Activated CD4-positive, alpha-beta T cell treated with anti-CD3 and anti-CD28 coated beads, Interleukin-2, amount 10 ng/mL, durations not matched to agents 24 days and 14 days (primary cell): ENCODE measurements at regions of chr19 and their contacts with region 1.

Region 1: GRCh38 chr19:28710278-28710677 is 502.7 kb downstream of the UQCRFS1 start:
- DNase-seq: peak; percentile 72
- H3K4me3 Mint-ChIP-seq: no peak overlapping the region
- H3K27ac Mint-ChIP-seq: no peak overlapping the region
- H3K4me1 Mint-ChIP-seq: no peaks in the 10 kb centered on the region
- H3K27me3 Mint-ChIP-seq: no peaks in the 10 kb centered on the region

Region 2: DNA sequence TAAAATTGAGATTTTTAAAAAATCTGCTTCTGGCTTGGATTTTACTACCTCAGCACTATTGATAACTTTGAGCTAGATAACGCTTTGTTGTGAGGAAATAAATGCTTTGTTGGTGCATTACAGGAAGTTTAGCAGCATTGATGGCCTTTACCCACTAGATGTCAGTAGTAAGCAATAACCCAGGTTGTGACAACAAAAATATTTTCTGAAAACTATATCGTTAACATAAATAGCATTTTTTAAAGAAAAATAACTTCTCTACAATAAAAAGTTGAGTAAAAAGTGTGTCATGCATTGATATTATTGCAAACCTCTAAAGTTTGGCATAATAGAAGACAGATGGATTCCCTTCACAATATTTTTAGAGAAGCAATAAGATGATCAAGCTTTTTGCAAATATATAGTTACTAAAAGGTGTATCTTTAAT is 743.9 kb before region 1 on chr19:
- intact Hi-C with region 1: loop called (anchors 5 kb)
- DNase-seq: no peak
- H3K4me3 Mint-ChIP-seq: no peak overlapping the region
- H3K27ac Mint-ChIP-seq: no peak overlapping the region
- H3K4me1 Mint-ChIP-seq: no peaks in the 10 kb centered on the region
- H3K27me3 Mint-ChIP-seq: no peaks in the 10 kb centered on the region

Region 3: GRCh38 chr19:28242297-28242927 is 467.9 kb before region 1 on chr19:
- intact Hi-C with region 1: loop called (anchors 2 kb)
- DNase-seq: peak; percentile 84
- H3K4me3 Mint-ChIP-seq: no peak overlapping the region
- H3K27ac Mint-ChIP-seq: no peak overlapping the region
- H3K4me1 Mint-ChIP-seq: no peaks in the 10 kb centered on the region
- H3K27me3 Mint-ChIP-seq: no peaks in the 10 kb centered on the region

Region 4: DNA sequence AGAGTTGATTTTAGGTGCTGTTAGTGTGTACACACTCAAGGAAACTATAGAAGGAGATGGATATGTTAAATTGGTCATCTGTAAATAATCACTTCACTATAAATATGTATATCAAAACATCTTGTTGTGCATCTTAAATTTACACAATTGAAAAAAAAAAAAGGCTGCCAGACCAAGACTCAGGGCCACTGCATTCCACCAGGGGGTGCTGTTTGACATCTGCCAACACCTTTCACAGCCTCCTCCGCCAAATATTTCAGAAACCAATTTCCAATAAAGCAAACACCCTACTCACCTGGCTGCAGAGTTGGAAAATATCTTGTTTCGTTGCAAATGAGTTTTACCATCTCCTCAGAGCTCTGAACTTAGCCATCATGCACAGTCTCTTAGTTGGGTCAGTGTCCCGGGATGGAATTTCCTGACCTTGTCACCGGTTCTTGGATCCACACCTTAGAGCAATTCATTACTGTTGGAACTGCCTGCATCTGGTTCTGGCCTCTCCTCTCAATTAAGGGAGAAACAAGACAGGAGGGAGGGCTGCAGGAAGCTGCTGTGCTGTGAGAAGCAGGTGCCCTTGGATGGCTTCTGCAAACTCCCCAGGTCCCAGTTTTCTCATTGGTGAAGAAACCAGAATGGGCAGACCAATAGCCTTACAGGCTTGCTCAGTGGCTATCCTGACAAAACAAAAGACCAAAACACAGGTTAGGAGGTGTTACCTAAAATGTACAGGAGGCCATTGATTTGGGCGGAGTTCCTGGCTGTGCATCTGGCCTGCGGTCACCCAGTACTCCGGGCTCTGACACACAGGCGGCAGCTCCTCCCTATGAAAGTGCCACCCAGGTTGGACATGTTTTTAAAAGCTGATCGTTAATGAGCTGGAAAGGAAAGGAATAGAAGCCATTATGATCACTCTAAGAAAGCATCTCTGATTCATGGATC is 243.9 kb before region 1 on chr19:
- intact Hi-C with region 1: loop called (anchors 1 kb)
- DNase-seq: peak; percentile 92
- H3K4me3 Mint-ChIP-seq: no peak overlapping the region
- H3K27ac Mint-ChIP-seq: peak overlapping the region; percentile 79
- H3K4me1 Mint-ChIP-seq: peaks cover 61% of the 10 kb centered on the region
- H3K27me3 Mint-ChIP-seq: no peaks in the 10 kb centered on the region

Region 5: GRCh38 chr19:28670836-28671235 is 39.4 kb before region 1 on chr19:
- intact Hi-C with region 1: no loop called
- DNase-seq: no peak
- H3K4me3 Mint-ChIP-seq: no peak overlapping the region
- H3K27ac Mint-ChIP-seq: no peak overlapping the region
- H3K4me1 Mint-ChIP-seq: no peaks in the 10 kb centered on the region
- H3K27me3 Mint-ChIP-seq: no peaks in the 10 kb centered on the region

Region 6: GRCh38 chr19:28948566-28948965 is 238.3 kb after region 1 on chr19:
- intact Hi-C with region 1: no loop called
- DNase-seq: no peak
- H3K4me3 Mint-ChIP-seq: no peak overlapping the region
- H3K27ac Mint-ChIP-seq: no peak overlapping the region
- H3K4me1 Mint-ChIP-seq: no peaks in the 10 kb centered on the region
- H3K27me3 Mint-ChIP-seq: no peaks in the 10 kb centered on the region